Calu3 (cell line): ENCODE measurements at regions of chr12 and their contacts with region 1.

Region 1: GRCh38 chr12:6285063-6285477 is 25.4 kb upstream of the PLEKHG6 start:
- DNase-seq: peak; percentile 81
- H3K4me3 Mint-ChIP-seq: no peak overlapping the region
- H3K27ac Mint-ChIP-seq: peak overlapping the region; percentile 73
- H3K4me1 Mint-ChIP-seq: peaks cover 35% of the 10 kb centered on the region
- H3K27me3 Mint-ChIP-seq: no peaks in the 10 kb centered on the region
- CTCF ChIP-seq: peak; percentile 84

Region 2: DNA sequence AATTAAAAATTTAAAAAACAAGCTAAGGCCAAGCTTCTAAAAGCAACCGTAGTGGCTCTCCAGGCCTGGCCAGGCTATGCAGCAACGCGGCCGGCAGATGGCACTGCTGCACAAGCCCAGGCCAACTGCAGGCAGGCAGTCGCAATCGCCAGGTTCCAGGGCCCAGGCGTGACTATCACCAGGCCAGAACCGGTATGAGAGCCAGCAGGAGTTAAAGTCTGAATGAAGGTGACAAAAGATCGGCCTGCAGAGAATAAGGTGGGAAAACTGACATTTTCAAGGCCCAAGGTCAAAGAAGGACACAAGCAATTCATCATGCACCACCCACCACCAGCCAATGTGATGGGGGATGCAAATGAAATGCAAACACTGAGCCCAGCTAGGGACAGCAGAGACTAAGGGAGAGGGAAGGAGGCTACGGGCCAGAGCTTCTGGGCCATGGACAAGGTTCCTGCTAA is 296.4 kb before region 1 on chr12:
- CTCF ChIA-PET with region 1: interaction called, 5 read pairs
- intact Hi-C with region 1: loop called (anchors 10 kb)
- DNase-seq: peak; percentile 84
- H3K4me3 Mint-ChIP-seq: no peak overlapping the region
- H3K27ac Mint-ChIP-seq: no peak overlapping the region
- H3K4me1 Mint-ChIP-seq: peaks cover 8% of the 10 kb centered on the region
- H3K27me3 Mint-ChIP-seq: peaks cover 31% of the 10 kb centered on the region
- CTCF ChIP-seq: peak; percentile 84

Region 3: GRCh38 chr12:6062757-6063735 is 222.0 kb before region 1 on chr12:
- CTCF ChIA-PET with region 1: interaction called, 10 read pairs
- intact Hi-C with region 1: loop called (anchors 1 kb)
- DNase-seq: peak; percentile 76
- H3K4me3 Mint-ChIP-seq: no peak overlapping the region
- H3K27ac Mint-ChIP-seq: no peak overlapping the region
- H3K4me1 Mint-ChIP-seq: peaks cover 13% of the 10 kb centered on the region
- H3K27me3 Mint-ChIP-seq: peaks cover 21% of the 10 kb centered on the region
- CTCF ChIP-seq: peak; percentile 94

Region 4: GRCh38 chr12:6140651-6141447 is 144.2 kb before region 1 on chr12:
- CTCF ChIA-PET with region 1: no interaction called
- intact Hi-C with region 1: no loop called
- DNase-seq: no peak
- H3K4me3 Mint-ChIP-seq: no peak overlapping the region
- H3K27ac Mint-ChIP-seq: no peak overlapping the region
- H3K4me1 Mint-ChIP-seq: no peaks in the 10 kb centered on the region
- H3K27me3 Mint-ChIP-seq: peaks cover under 1% of the 10 kb centered on the region
- CTCF ChIP-seq: no peak

Region 5: GRCh38 chr12:6195665-6196535 is 89.2 kb before region 1 on chr12:
- CTCF ChIA-PET with region 1: interaction called, 48 read pairs
- intact Hi-C with region 1: loop called (anchors 1 kb)
- DNase-seq: peak; percentile 93
- H3K4me3 Mint-ChIP-seq: no peak overlapping the region
- H3K27ac Mint-ChIP-seq: peak overlapping the region; percentile 14
- H3K4me1 Mint-ChIP-seq: peaks cover 33% of the 10 kb centered on the region
- H3K27me3 Mint-ChIP-seq: peaks cover 18% of the 10 kb centered on the region
- CTCF ChIP-seq: peak; percentile 92

Region 6: GRCh38 chr12:6295094-6295811 is 10.2 kb after region 1 on chr12:
- CTCF ChIA-PET with region 1: interaction called, 17 read pairs
- intact Hi-C with region 1: no loop called
- DNase-seq: peak; percentile 89
- H3K4me3 Mint-ChIP-seq: peak overlapping the region; percentile 12
- H3K27ac Mint-ChIP-seq: peak overlapping the region; percentile 98
- H3K4me1 Mint-ChIP-seq: peaks cover 48% of the 10 kb centered on the region
- H3K27me3 Mint-ChIP-seq: no peaks in the 10 kb centered on the region
- CTCF ChIP-seq: no peak

Region 7: GRCh38 chr12:6383572-6384498 is 98.8 kb after region 1 on chr12 and contains the start of gene LTBR:
- CTCF ChIA-PET with region 1: no interaction called
- intact Hi-C with region 1: no loop called
- DNase-seq: peak; percentile 96
- H3K4me3 Mint-ChIP-seq: peak within 1 kb of the TSS; percentile 93
- H3K27ac Mint-ChIP-seq: peak within 1 kb of the TSS; percentile 90
- H3K4me1 Mint-ChIP-seq: peaks cover 32% of the 10 kb centered on the region
- H3K27me3 Mint-ChIP-seq: no peaks in the 10 kb centered on the region
- CTCF ChIP-seq: no peak
- total RNA-seq, gene LTBR: 165 and 167 TPM in 2 replicates

Region 8: GRCh38 chr12:6554168-6555017 is 269.3 kb after region 1 on chr12:
- CTCF ChIA-PET with region 1: no interaction called
- intact Hi-C with region 1: no loop called
- DNase-seq: peak; percentile 69
- H3K4me3 Mint-ChIP-seq: no peak overlapping the region
- H3K27ac Mint-ChIP-seq: no peak overlapping the region
- H3K4me1 Mint-ChIP-seq: no peaks in the 10 kb centered on the region
- H3K27me3 Mint-ChIP-seq: no peaks in the 10 kb centered on the region
- CTCF ChIP-seq: peak; percentile 39